Activated CD4-positive, alpha-beta T cell treated with anti-CD3 and anti-CD28 coated beads for 36 hours (primary cell): ENCODE measurements at regions of chr3 and their contacts with region 1.

Region 1: GRCh38 chr3:101643861-101644613 is 32.9 kb downstream of the ZBTB11 start:
- DNase-seq: peak; percentile 67
- ATAC-seq: peak; percentile 83
- H3K4me3 Mint-ChIP-seq: no peak overlapping the region
- H3K27ac Mint-ChIP-seq: peak overlapping the region; percentile 90
- H3K4me1 Mint-ChIP-seq: peaks cover 29% of the 10 kb centered on the region
- H3K27me3 Mint-ChIP-seq: no peaks in the 10 kb centered on the region

Region 2: GRCh38 chr3:101602731-101603130 is 41.3 kb before region 1 on chr3:
- CTCF ChIA-PET with region 1: no interaction called
- POLR2A ChIA-PET with region 1: interaction called, 10 read pairs
- intact Hi-C with region 1: no loop called
- DNase-seq: no peak
- ATAC-seq: no peak
- H3K4me3 Mint-ChIP-seq: no peak overlapping the region
- H3K27ac Mint-ChIP-seq: no peak overlapping the region
- H3K4me1 Mint-ChIP-seq: no peaks in the 10 kb centered on the region
- H3K27me3 Mint-ChIP-seq: no peaks in the 10 kb centered on the region

Region 3: GRCh38 chr3:101624857-101625256 is 19.2 kb before region 1 on chr3:
- CTCF ChIA-PET with region 1: no interaction called
- POLR2A ChIA-PET with region 1: no interaction called
- intact Hi-C with region 1: no loop called
- DNase-seq: no peak
- ATAC-seq: no peak
- H3K4me3 Mint-ChIP-seq: no peak overlapping the region
- H3K27ac Mint-ChIP-seq: no peak overlapping the region
- H3K4me1 Mint-ChIP-seq: no peaks in the 10 kb centered on the region
- H3K27me3 Mint-ChIP-seq: no peaks in the 10 kb centered on the region

Region 4: DNA sequence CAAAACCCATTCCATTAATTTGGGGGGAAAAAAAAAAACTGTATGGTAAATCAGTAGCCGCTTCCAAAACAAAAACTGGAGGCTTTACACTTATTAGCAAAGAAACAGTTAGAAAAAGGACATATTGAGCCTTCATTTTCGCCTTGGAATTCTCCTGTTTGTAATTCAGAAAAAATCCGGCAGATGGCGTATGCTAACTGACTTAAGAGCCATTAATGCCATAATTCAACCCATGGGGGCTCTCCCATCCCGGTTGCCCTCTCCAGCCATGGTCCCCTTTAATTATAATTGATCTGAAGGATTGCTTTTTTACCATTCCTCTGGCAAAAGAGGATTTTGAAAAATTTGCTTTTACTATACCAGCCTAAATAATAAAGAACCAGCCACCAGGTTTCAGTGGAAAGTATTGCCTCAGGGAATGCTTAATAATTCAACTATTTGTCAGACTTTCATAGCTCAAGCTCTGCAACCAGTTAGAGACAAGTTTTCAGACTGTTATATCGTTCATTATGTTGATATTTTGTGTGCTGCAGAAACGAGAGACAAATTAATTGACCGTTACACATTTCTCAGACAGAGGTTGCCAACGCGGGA is 51.8 kb after region 1 on chr3:
- CTCF ChIA-PET with region 1: no interaction called
- POLR2A ChIA-PET with region 1: no interaction called
- intact Hi-C with region 1: no loop called
- DNase-seq: peak; percentile 48
- ATAC-seq: no peak
- H3K4me3 Mint-ChIP-seq: no peak overlapping the region
- H3K27ac Mint-ChIP-seq: no peak overlapping the region
- H3K4me1 Mint-ChIP-seq: peaks cover 7% of the 10 kb centered on the region
- H3K27me3 Mint-ChIP-seq: no peaks in the 10 kb centered on the region

Region 5: DNA sequence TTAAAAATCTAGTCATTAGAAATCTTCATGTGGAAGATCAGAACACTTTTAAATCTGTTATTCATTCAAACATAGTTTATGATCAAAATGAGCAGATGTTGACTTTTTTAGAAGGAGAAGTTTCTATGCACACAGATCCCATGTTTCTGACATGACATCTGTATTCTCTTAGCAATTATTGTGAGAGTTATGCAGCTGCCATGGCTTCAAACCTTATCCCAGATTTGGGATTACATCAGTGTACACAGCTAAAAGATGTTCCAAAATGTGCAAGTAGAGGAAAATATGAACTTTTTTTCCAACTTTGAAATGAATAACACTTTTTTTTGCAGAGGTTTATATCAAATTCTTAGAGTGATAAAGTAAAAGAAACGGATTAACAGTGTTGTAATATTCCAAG is 1957.6 kb after region 1 on chr3:
- CTCF ChIA-PET with region 1: no interaction called
- POLR2A ChIA-PET with region 1: no interaction called
- intact Hi-C with region 1: no loop called
- DNase-seq: no peak
- ATAC-seq: no peak
- H3K4me3 Mint-ChIP-seq: no peak overlapping the region
- H3K27ac Mint-ChIP-seq: no peak overlapping the region
- H3K4me1 Mint-ChIP-seq: no peaks in the 10 kb centered on the region
- H3K27me3 Mint-ChIP-seq: no peaks in the 10 kb centered on the region